ENCODE measurements at regions of chr7 and their contacts with region 1.

Region 1: DNA sequence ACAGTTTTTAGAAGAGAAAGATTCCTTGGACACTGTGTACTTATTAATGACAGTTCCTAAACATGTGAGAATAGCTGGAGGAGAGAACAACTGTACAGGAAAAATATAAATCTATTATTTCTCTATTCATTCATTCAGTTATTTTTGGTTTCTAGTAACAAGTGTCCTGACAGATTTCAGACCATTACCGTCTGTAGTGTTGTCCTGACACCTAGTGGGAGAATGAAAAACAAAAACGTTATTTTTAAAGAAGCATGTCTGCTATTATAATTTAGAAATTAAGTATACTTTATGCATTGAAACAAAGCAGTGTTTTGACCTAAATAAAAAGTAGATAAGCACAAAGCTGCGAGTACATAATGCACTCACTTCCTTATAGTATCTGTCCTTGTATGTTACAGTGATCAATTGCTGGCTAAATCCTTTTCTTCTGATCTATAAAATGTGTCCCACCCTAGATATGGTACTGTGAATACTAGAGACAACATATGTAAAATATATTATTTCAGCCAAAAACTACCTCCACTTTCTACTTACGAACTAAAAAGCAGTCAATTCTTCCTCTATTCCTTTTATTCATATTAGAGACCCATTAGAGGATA is 575.6 kb downstream of the ARL4A start:
- DNase-seq: no peak
- H3K4me3 ChIP-seq: no peak overlapping the region
- H3K27ac ChIP-seq: no peak overlapping the region
- H3K4me1 ChIP-seq: no peaks in the 10 kb centered on the region
- H3K27me3 ChIP-seq: no peaks in the 10 kb centered on the region
- CTCF ChIP-seq: peak in 1 of 3 experiments; percentile 46

Region 2: DNA sequence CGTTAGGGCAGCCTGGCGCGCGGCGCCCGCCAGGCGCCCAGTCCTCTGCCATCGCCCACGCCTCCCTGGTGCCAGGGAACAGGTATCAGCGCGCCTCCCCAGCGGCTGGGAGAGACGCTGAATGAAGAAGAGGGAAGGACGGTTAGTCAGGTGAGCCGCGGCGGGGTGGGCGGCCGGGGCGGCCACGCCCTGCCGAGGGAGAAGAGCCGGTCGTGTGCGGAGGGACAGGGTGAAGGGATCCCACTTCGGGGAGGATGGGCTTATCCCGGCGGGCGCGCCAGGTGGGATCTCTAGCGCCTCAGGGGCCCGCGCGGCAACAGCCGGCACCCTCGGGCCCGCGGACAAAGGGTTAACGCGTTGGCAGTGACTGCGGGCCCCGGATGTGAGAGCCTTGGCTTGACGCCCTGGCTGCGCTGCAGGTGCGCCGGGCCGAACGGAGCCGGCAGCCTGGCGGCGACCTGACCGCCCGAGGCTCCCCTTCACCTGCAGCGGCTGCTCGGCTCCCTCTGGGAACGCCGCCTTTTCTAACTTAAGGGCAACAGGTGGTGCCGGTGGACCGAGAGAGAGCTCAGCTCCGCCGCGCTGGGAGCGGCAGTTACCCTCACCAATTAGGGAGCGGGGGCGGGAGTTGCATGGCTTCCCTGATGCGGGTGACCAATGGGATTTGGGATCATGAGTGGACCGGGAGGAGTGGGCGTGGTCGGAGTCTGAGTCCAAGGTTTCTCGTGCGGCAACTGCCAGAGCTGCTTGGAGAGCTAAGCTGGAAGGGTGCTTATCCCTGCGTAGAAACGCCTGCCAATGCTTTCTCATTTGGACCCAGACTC is 575.9 kb before region 1 on chr7 and contains the start of gene ARL4A:
- dilution Hi-C with region 1: loop called (anchors 25 kb)
- DNase-seq: peak; percentile 75
- H3K4me3 ChIP-seq: peak within 1 kb of the TSS; percentile 69 to 97 (median 91)
- H3K27ac ChIP-seq: peak within 1 kb of the TSS; percentile 75
- H3K4me1 ChIP-seq: peaks cover 8% of the 10 kb centered on the region
- H3K27me3 ChIP-seq: no peaks in the 10 kb centered on the region
- CTCF ChIP-seq: peak in 2 of 3 experiments; percentile 63 to 73
- polyA plus RNA-seq, gene ARL4A: 9.5 to 17.1 TPM (median 13.6 TPM) in 3 replicates

Measured in keratinocyte (primary cell).